Heart right ventricle (tissue), 16 donors: ENCODE measurements at regions of chr12 and their contacts with region 1.

Region 1: GRCh38 chr12:52515927-52516831 is 4.0 kb downstream of the KRT5 start:
- DNase-seq: no peak
- ATAC-seq: no peak
- H3K4me3 ChIP-seq: no peak overlapping the region
- H3K27ac ChIP-seq: no peak overlapping the region
- H3K4me1 ChIP-seq: no peaks in the 10 kb centered on the region
- H3K27me3 ChIP-seq: peaks cover 0 to 56% (median 5%) of the 10 kb centered on the region in 7 donors
- CTCF ChIP-seq: no peak

Region 2: DNA sequence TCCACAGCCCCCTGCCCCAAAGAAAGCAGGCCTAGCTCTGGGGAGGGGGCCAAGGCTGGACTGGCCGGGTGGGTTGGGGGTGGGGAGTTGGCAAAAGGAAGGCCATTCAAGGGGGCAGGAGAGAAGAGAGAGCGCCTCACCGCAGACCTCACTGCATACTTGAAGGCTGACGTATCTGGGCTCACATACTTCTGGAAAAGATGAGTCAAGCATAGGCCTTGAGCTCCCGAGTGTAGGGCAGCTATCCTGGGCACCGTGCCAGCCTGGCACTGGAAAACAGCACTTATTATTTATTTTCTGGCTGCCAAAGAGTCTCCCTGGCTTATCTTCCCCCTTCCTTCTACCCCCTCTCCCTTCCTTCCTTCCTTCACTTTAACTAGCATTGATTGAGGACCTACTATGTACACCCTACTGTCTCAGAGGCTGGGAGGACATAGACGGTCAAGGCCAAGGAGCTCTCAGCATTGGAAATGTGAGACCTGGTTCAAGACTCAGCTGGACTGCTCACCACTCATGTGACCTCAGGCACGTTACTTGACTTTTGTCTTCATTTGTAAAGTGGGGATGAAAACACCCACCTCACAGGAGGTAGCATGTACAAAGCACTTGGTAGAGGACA is 323.9 kb before region 1 on chr12:
- intact Hi-C with region 1: no loop called
- DNase-seq: peak; percentile 83
- ATAC-seq: peak; percentile 82 to 96 (median 93)
- H3K4me3 ChIP-seq: no peak overlapping the region
- H3K27ac ChIP-seq: peak overlapping the region in 6 of 10 donors; percentile 15 to 71 (median 48)
- H3K4me1 ChIP-seq: peaks cover 8 to 61% (median 33%) of the 10 kb centered on the region in 9 donors
- H3K27me3 ChIP-seq: no peaks in the 10 kb centered on the region
- CTCF ChIP-seq: no peak

Region 3: DNA sequence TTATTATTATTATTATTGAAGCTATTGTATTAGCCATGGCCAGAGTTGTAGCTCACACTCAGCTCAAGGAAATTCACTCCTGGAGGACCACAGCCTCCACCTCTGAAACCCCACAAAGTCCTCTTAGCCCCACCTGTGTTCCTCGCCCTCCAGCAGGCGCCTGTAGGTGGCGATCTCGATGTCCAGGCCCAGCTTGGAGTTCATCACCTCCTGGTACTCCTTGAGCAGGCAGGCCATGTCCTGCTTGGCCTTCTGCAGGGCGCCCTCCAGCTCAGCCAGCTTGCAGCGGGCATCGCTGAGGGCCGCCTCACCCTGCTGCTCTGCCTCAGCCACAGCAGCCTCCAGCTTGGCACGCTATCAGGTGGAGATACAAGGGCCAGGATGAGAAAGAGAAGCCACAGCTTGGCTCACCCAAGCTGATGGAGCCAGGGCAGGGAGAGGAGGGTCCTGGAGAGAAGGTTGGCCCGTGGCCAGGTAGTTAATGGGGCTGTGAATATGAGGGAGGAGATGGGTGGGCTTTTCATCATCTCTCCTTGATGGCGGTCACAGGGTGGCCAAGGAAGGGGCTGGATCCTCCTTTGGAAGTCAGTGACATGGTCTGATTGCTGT is 154.0 kb before region 1 on chr12:
- intact Hi-C with region 1: loop called in 1 of 10 experiments (anchors 10 kb)
- DNase-seq: no peak
- ATAC-seq: no peak
- H3K4me3 ChIP-seq: no peak overlapping the region
- H3K27ac ChIP-seq: no peak overlapping the region
- H3K4me1 ChIP-seq: no peaks in the 10 kb centered on the region
- H3K27me3 ChIP-seq: peaks cover 0 to 28% (median 12%) of the 10 kb centered on the region in 7 donors
- CTCF ChIP-seq: peak in 2 of 9 donors; percentile 16 to 18